Gastrocnemius medialis (tissue), 4 donors: ENCODE measurements at regions of chr20 and their contacts with region 1.

Region 1: GRCh38 chr20:11204926-11205768 is 531.3 kb upstream of the JAG1 start:
- DNase-seq: peak; percentile 41 to 53
- ATAC-seq: peak; percentile 94 to 96
- H3K4me3 ChIP-seq: no peak overlapping the region
- H3K27ac ChIP-seq: peak overlapping the region in 3 of 4 donors; percentile 36 to 45 (median 36)
- H3K4me1 ChIP-seq: peaks cover 7 to 8% of the 10 kb centered on the region in 2 donors
- H3K27me3 ChIP-seq: no peaks in the 10 kb centered on the region
- CTCF ChIP-seq: peak; percentile 65 to 75 (median 70)
- POLR2A ChIP-seq: no peak

Region 2: DNA sequence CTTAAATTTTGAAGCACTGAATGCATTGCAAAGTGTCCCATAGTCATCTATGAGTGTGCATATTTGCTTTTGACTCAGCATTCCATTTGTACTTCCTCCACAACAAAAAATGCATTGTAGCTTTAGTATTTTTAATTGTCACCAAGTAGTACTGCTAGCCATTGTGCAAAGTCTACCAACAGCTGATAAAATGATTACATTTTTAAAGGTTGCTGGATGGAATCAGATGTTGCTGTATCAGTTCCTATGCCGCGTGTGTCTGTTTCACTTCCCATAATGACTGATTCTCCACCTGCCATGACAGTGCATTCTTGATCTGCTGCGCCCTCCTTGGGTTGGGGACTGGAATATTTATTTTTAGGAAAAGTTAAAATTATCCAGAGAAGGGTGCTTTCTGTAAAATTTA is 728.8 kb before region 1 on chr20:
- in situ Hi-C with region 1: no loop called
- intact Hi-C with region 1: loop called (anchors 10 kb)
- DNase-seq: no peak
- ATAC-seq: peak in 1 of 2 donors; percentile 30
- H3K4me3 ChIP-seq: no peak overlapping the region
- H3K27ac ChIP-seq: no peak overlapping the region
- H3K4me1 ChIP-seq: peaks cover 5 to 15% of the 10 kb centered on the region in 2 donors
- H3K27me3 ChIP-seq: no peaks in the 10 kb centered on the region
- CTCF ChIP-seq: no peak
- POLR2A ChIP-seq: no peak

Region 3: GRCh38 chr20:10553326-10553984 is 651.7 kb before region 1 on chr20:
- in situ Hi-C with region 1: loop called in 1 of 4 experiments (anchors 10 kb)
- intact Hi-C with region 1: loop called (anchors 5 kb)
- DNase-seq: peak; percentile 22 to 45
- ATAC-seq: peak; percentile 58 to 74
- H3K4me3 ChIP-seq: no peak overlapping the region
- H3K27ac ChIP-seq: no peak overlapping the region
- H3K4me1 ChIP-seq: no peaks in the 10 kb centered on the region
- H3K27me3 ChIP-seq: no peaks in the 10 kb centered on the region
- CTCF ChIP-seq: peak; percentile 63 to 79 (median 72)
- POLR2A ChIP-seq: no peak

Region 4: GRCh38 chr20:10686356-10687133 is 518.6 kb before region 1 on chr20:
- in situ Hi-C with region 1: loop called in 1 of 4 experiments (anchors 10 kb)
- intact Hi-C with region 1: no loop called
- DNase-seq: no peak
- ATAC-seq: no peak
- H3K4me3 ChIP-seq: no peak overlapping the region
- H3K27ac ChIP-seq: no peak overlapping the region
- H3K4me1 ChIP-seq: no peaks in the 10 kb centered on the region
- H3K27me3 ChIP-seq: no peaks in the 10 kb centered on the region
- CTCF ChIP-seq: no peak
- POLR2A ChIP-seq: no peak

Region 5: DNA sequence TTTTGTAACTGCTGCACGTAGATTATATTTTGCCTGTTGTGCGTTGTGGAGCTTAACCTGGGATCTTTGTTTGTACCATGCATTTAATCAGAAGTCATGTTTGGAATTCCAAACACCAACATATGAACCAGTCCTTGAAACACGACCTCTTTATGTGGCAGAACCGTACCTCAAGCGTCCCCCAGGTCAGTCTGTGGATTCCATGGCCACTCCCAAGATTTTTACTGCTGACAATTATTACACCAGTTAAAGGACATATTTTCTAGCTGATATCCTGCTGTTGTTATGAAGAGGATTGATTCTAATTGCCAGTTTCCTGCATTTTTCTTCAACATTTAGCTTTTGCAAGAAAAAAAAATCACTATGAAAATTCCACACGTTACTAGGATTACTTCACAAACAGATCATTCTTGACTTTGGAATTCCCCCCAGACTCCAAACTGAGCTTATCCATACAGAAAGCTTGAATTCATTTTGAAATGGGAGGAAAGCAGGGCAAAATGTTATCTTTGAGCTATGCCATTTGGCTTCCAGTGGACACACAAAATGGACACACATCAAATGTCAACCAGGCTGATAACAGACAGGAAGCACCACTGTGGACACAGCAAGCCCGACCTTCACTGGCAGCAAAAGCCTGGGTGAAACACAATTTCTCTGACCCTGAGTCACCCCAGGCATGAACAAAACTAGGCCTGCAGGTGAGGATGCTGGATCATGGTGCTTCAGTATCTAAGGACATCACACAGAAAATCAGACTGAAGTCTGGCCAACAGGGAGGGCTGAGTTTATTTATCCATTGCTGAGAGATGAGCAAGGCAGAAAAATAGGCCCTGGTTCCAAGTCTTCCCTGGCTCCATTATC is 11.5 kb after region 1 on chr20:
- in situ Hi-C with region 1: no loop called
- intact Hi-C with region 1: no loop called
- DNase-seq: no peak
- ATAC-seq: no peak
- H3K4me3 ChIP-seq: no peak overlapping the region
- H3K27ac ChIP-seq: no peak overlapping the region
- H3K4me1 ChIP-seq: peaks cover 0 to 4% of the 10 kb centered on the region in 2 donors
- H3K27me3 ChIP-seq: no peaks in the 10 kb centered on the region
- CTCF ChIP-seq: no peak
- POLR2A ChIP-seq: no peak